ENCODE measurements at regions of chrX and their contacts with region 1.

Region 1: DNA sequence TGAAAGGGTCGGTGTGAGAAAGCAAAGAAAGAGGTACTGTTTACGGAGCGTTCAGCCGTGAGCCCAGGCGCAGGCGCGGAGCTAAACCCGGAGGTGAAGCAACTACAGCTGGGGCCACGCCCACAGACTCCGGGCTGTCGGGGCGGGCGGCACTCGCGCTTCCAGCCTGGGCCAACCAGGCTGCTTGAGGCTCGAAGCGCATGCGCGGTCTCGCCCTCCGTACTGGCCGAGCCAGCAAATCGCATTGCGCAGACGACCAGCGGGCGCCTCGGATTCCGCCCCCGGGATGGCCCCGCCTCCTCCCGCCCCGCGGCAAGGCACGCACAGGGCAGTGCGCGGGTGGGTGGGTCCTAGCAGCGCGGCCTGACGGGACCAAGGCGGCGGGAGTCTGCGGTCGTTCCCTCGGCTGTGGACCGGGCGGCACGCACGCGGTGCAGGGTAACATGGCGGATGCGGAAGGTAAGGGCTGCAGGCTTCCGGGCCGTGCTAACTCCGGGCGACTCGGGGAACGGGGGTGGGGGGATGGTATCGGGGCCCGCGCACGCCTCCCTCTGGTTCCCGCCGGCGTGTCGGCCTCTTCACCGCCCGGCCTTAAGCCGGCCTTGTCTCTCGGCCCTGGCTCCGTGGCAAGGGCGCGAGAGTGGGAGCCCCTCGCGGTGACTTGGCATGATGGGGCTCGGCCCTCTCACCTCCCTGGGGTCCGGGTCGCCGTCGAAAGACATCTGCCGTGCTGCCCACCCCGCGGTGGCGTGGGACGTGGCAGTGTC is at the start of gene DKC1:
- DNase-seq: peak; percentile 89 to 99
- H3K4me3 ChIP-seq: peak within 1 kb of the TSS; percentile 89
- H3K27ac ChIP-seq: peak within 1 kb of the TSS; percentile 77
- H3K4me1 ChIP-seq: peaks cover 15% of the 10 kb centered on the region
- H3K27me3 ChIP-seq: no peaks in the 10 kb centered on the region
- CTCF ChIP-seq: 0 out of 2 replicates have a peak, but pooled peaks have one; percentile 6
- total RNA-seq, gene DKC1: 83.5 and 101 TPM in 2 replicates

Region 2: GRCh38 chrX:154804957-154805695 is 42.4 kb after region 1 on chrX and contains the start of gene MPP1:
- CTCF ChIA-PET with region 1: no interaction called
- POLR2A ChIA-PET with region 1: interaction called, 6 read pairs
- intact Hi-C with region 1: loop called (anchors 2 kb)
- DNase-seq: peak; percentile 44 to 87
- H3K4me3 ChIP-seq: peak within 1 kb of the TSS; percentile 54
- H3K27ac ChIP-seq: no peak within 1 kb of the TSS
- H3K4me1 ChIP-seq: peaks cover 5% of the 10 kb centered on the region; the same call in 1 of the 2 replicates
- H3K27me3 ChIP-seq: peaks cover 3% of the 10 kb centered on the region; the same call in 1 of the 2 replicates
- CTCF ChIP-seq: no peak
- total RNA-seq, gene MPP1: 4.2 and 4.8 TPM in 2 replicates

Region 3: GRCh38 chrX:154840856-154841255 is 78.2 kb after region 1 on chrX:
- CTCF ChIA-PET with region 1: no interaction called
- POLR2A ChIA-PET with region 1: no interaction called
- intact Hi-C with region 1: loop called (anchors 1 kb)
- DNase-seq: peak; percentile 0 to 42
- H3K4me3 ChIP-seq: no peak overlapping the region
- H3K27ac ChIP-seq: no peak overlapping the region
- H3K4me1 ChIP-seq: no peaks in the 10 kb centered on the region
- H3K27me3 ChIP-seq: no peaks in the 10 kb centered on the region
- CTCF ChIP-seq: peak; percentile 78

Region 4: GRCh38 chrX:155086202-155086840 is 323.6 kb after region 1 on chrX:
- CTCF ChIA-PET with region 1: no interaction called
- POLR2A ChIA-PET with region 1: no interaction called
- intact Hi-C with region 1: no loop called
- DNase-seq: peak in 1 of 2 experiments; percentile 26
- H3K4me3 ChIP-seq: no peak overlapping the region
- H3K27ac ChIP-seq: no peak overlapping the region
- H3K4me1 ChIP-seq: no peaks in the 10 kb centered on the region
- H3K27me3 ChIP-seq: no peaks in the 10 kb centered on the region
- CTCF ChIP-seq: peak; percentile 71